CD4-positive, alpha-beta T cell (primary cell): ENCODE measurements at regions of chr9 and their contacts with region 1.

Region 1: DNA sequence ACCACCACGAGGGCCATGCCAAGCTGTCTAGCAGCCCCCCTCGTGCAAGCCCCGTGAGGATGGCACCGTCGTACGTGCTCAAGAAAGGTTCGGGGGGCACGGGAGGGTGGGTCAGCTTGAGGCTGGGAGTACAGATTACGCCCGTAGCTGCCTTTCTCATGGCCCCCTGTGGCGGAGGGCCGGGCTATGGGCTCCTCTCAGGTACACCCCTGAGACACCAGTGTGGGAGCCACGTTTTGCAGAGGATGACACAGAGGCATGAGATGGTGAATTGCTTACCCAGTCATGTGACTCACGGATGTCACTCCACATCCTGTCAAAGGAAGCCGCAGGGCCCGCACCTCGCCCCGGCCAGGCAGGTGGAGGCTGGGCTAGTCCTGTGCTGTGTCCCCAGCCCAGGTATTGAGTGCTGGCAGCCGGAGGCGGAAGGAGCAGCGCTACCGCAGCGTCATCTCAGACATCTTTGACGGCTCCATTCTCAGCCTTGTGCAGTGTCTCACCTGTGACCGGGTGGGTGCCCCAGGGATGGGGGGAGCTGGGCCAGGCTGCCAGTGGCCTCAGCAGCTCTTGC is 33.7 kb downstream of the USP20 start:
- DNase-seq: peak; percentile 85 to 98 (median 92)
- ATAC-seq: peak; percentile 87
- H3K4me3 ChIP-seq: peak overlapping the region; percentile 40
- H3K4me3 Mint-ChIP-seq: peak overlapping the region; percentile 59
- H3K27ac ChIP-seq: peak overlapping the region; percentile 93 to 96
- H3K27ac Mint-ChIP-seq: peak overlapping the region; percentile 86
- H3K4me1 ChIP-seq: peaks cover 94% of the 10 kb centered on the region
- H3K4me1 Mint-ChIP-seq: peaks cover 75% of the 10 kb centered on the region
- H3K27me3 ChIP-seq: no peaks in the 10 kb centered on the region
- H3K27me3 Mint-ChIP-seq: no peaks in the 10 kb centered on the region
- CTCF ChIP-seq: no peak

Region 2: GRCh38 chr9:129696938-129697650 is 171.9 kb before region 1 on chr9:
- CTCF ChIA-PET with region 1: no interaction called
- POLR2A ChIA-PET with region 1: no interaction called
- intact Hi-C with region 1: no loop called
- DNase-seq: no peak
- ATAC-seq: no peak
- H3K4me3 ChIP-seq: no peak overlapping the region
- H3K4me3 Mint-ChIP-seq: no peak overlapping the region
- H3K27ac ChIP-seq: no peak overlapping the region
- H3K27ac Mint-ChIP-seq: no peak overlapping the region
- H3K4me1 ChIP-seq: peaks cover 3% of the 10 kb centered on the region
- H3K4me1 Mint-ChIP-seq: no peaks in the 10 kb centered on the region
- H3K27me3 ChIP-seq: peaks cover 23 to 44% of the 10 kb centered on the region in 2 experiments
- H3K27me3 Mint-ChIP-seq: peaks cover 62% of the 10 kb centered on the region
- CTCF ChIP-seq: no peak

Region 3: GRCh38 chr9:129823935-129824601 is 44.9 kb before region 1 on chr9 and contains the start of gene TOR1A:
- CTCF ChIA-PET with region 1: no interaction called
- POLR2A ChIA-PET with region 1: no interaction called
- intact Hi-C with region 1: loop called in 1 of 2 experiments (anchors 5 kb)
- DNase-seq: peak; percentile 85 to 95 (median 90)
- ATAC-seq: peak; percentile 95
- H3K4me3 ChIP-seq: peak within 1 kb of the TSS; percentile 64
- H3K4me3 Mint-ChIP-seq: peak within 1 kb of the TSS; percentile 94
- H3K27ac ChIP-seq: peak within 1 kb of the TSS in 1 of 2 donors; percentile 46
- H3K27ac Mint-ChIP-seq: peak within 1 kb of the TSS; percentile 81
- H3K4me1 ChIP-seq: peaks cover 14% of the 10 kb centered on the region
- H3K4me1 Mint-ChIP-seq: peaks cover 12% of the 10 kb centered on the region
- H3K27me3 ChIP-seq: no peaks in the 10 kb centered on the region
- H3K27me3 Mint-ChIP-seq: no peaks in the 10 kb centered on the region
- CTCF ChIP-seq: no peak
- total RNA-seq, gene TOR1A: 12.6 to 13.9 TPM

Region 4: GRCh38 chr9:129889941-129890717 is 21.1 kb after region 1 on chr9:
- CTCF ChIA-PET with region 1: interaction called, 10 read pairs
- POLR2A ChIA-PET with region 1: interaction called, 30 read pairs
- intact Hi-C with region 1: loop called (anchors 1 to 2 kb)
- DNase-seq: peak; percentile 46 to 91 (median 64)
- ATAC-seq: no peak
- H3K4me3 ChIP-seq: peak overlapping the region; percentile 50
- H3K4me3 Mint-ChIP-seq: peak overlapping the region; percentile 96
- H3K27ac ChIP-seq: peak overlapping the region; percentile 91 to 99
- H3K27ac Mint-ChIP-seq: peak overlapping the region; percentile 99
- H3K4me1 ChIP-seq: peaks cover 98% of the 10 kb centered on the region
- H3K4me1 Mint-ChIP-seq: peaks cover 87% of the 10 kb centered on the region
- H3K27me3 ChIP-seq: no peaks in the 10 kb centered on the region
- H3K27me3 Mint-ChIP-seq: no peaks in the 10 kb centered on the region
- CTCF ChIP-seq: no peak